Activated CD8-positive, alpha-beta T cell treated with anti-CD3 and anti-CD28 coated beads, Interleukin-2, amount 10 ng/mL, durations not matched to agents 7 days and 5 days (primary cell): ENCODE measurements at regions of chr12 and their contacts with region 1.

Region 1: DNA sequence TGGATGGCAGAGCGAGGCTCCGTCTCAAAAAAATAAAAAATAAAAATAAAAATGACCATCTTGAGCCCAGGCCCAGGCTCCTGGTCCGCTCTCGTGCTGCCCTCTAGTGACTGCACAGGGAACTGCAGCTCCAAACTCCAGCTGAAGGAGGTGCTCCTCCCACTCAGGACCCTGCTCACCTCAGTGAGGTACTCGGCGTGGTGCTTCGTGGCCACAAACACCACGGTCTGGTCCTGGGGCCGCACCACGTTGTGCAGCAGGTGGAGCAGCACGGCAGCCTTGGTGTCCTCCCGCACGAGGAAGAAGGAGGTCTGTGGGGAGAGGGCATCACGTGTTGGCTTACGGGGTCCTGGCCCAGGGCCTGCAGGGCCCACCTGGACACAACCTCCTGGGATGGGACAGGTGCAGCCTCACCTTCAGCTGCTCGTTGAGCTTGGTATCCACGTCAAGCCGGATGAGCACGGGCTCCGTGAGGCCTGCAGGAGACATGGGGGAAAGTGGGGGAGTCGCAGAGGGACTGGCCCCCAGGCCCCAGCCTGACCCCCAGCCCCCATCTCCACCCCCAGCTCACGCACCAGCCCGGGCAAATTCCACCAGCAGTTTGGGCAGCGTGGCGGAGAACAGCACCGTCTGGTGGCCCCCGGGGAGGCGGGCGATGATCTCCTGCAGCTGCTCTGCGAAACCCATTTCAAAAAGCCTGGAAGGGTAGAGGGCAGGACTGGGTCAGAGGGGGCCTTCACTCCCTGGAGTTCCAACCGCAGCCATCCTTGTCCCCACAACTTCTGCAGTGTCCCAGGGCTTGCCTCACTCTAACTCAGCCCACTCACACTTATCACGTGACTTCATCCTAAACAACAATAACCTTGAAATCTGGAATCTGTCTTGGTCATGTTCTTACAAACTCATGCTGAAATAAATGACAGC is 10.6 kb downstream of the DDX54 start:
- DNase-seq: peak; percentile 81
- ATAC-seq: peak; percentile 78
- H3K4me3 Mint-ChIP-seq: no peak overlapping the region
- H3K27ac Mint-ChIP-seq: peak overlapping the region; percentile 63
- H3K4me1 Mint-ChIP-seq: peaks cover 2% of the 10 kb centered on the region
- H3K27me3 Mint-ChIP-seq: no peaks in the 10 kb centered on the region

Region 2: GRCh38 chr12:113048716-113049127 is 126.0 kb before region 1 on chr12:
- CTCF ChIA-PET with region 1: interaction called, 29 read pairs
- POLR2A ChIA-PET with region 1: no interaction called
- DNase-seq: peak; percentile 80
- ATAC-seq: peak; percentile 88
- H3K4me3 Mint-ChIP-seq: no peak overlapping the region
- H3K27ac Mint-ChIP-seq: no peak overlapping the region
- H3K4me1 Mint-ChIP-seq: no peaks in the 10 kb centered on the region
- H3K27me3 Mint-ChIP-seq: peaks cover 10% of the 10 kb centered on the region

Region 3: GRCh38 chr12:113135178-113136127 is 39.3 kb before region 1 on chr12 and contains the start of gene RASAL1:
- CTCF ChIA-PET with region 1: interaction called, 20 read pairs
- POLR2A ChIA-PET with region 1: no interaction called
- DNase-seq: peak; percentile 80
- ATAC-seq: peak; percentile 93
- H3K4me3 Mint-ChIP-seq: peak within 1 kb of the TSS; percentile 79
- H3K27ac Mint-ChIP-seq: peak within 1 kb of the TSS; percentile 76
- H3K4me1 Mint-ChIP-seq: peaks cover 16% of the 10 kb centered on the region
- H3K27me3 Mint-ChIP-seq: peaks cover 5% of the 10 kb centered on the region
- total RNA-seq, gene RASAL1: 0.26 to 0.47 TPM

Region 4: GRCh38 chr12:113152835-113153814 is 21.6 kb before region 1 on chr12:
- CTCF ChIA-PET with region 1: interaction called, 25 read pairs
- POLR2A ChIA-PET with region 1: interaction called, 3 read pairs
- DNase-seq: peak; percentile 75
- ATAC-seq: peak; percentile 77
- H3K4me3 Mint-ChIP-seq: peak overlapping the region; percentile 72
- H3K27ac Mint-ChIP-seq: peak overlapping the region; percentile 70
- H3K4me1 Mint-ChIP-seq: peaks cover 31% of the 10 kb centered on the region
- H3K27me3 Mint-ChIP-seq: peaks cover 21% of the 10 kb centered on the region

Region 5: GRCh38 chr12:113161414-113162016 is 13.2 kb before region 1 on chr12:
- CTCF ChIA-PET with region 1: interaction called, 21 read pairs
- POLR2A ChIA-PET with region 1: interaction called, 3 read pairs
- DNase-seq: no peak
- ATAC-seq: peak; percentile 38
- H3K4me3 Mint-ChIP-seq: no peak overlapping the region
- H3K27ac Mint-ChIP-seq: no peak overlapping the region
- H3K4me1 Mint-ChIP-seq: peaks cover 2% of the 10 kb centered on the region
- H3K27me3 Mint-ChIP-seq: no peaks in the 10 kb centered on the region

Region 6: GRCh38 chr12:113184900-113185773 is 10.4 kb after region 1 on chr12 and contains the starts of genes DDX54 and RITA1:
- CTCF ChIA-PET with region 1: interaction called, 14 read pairs
- POLR2A ChIA-PET with region 1: interaction called, 12 read pairs
- DNase-seq: peak; percentile 93
- ATAC-seq: peak; percentile 92
- H3K4me3 Mint-ChIP-seq: peak within 1 kb of the TSS; percentile 97
- H3K27ac Mint-ChIP-seq: peak within 1 kb of the TSS; percentile 98
- H3K4me1 Mint-ChIP-seq: peaks cover 35% of the 10 kb centered on the region
- H3K27me3 Mint-ChIP-seq: no peaks in the 10 kb centered on the region
- total RNA-seq, gene DDX54: 79.4 to 82.0 TPM
- total RNA-seq, gene RITA1: 21.0 to 22.6 TPM